ENCODE measurements at regions of chr2 and their contacts with region 1.

Region 1: GRCh38 chr2:241355983-241356870 is at the start of gene FARP2:
- DNase-seq: peak; percentile 94 to 99 (median 97)
- ATAC-seq: peak; percentile 94
- H3K4me3 ChIP-seq: peak within 1 kb of the TSS; percentile 55 to 58
- H3K4me3 Mint-ChIP-seq: peak within 1 kb of the TSS; percentile 86
- H3K27ac ChIP-seq: peak within 1 kb of the TSS; percentile 23 to 52
- H3K27ac Mint-ChIP-seq: peak within 1 kb of the TSS; percentile 87
- H3K4me1 ChIP-seq: peaks cover 10% of the 10 kb centered on the region
- H3K4me1 Mint-ChIP-seq: peaks cover 21% of the 10 kb centered on the region
- H3K27me3 ChIP-seq: no peaks in the 10 kb centered on the region
- H3K27me3 Mint-ChIP-seq: no peaks in the 10 kb centered on the region
- CTCF ChIP-seq: no peak
- total RNA-seq, gene FARP2: 20.6 to 22.5 TPM

Region 2: DNA sequence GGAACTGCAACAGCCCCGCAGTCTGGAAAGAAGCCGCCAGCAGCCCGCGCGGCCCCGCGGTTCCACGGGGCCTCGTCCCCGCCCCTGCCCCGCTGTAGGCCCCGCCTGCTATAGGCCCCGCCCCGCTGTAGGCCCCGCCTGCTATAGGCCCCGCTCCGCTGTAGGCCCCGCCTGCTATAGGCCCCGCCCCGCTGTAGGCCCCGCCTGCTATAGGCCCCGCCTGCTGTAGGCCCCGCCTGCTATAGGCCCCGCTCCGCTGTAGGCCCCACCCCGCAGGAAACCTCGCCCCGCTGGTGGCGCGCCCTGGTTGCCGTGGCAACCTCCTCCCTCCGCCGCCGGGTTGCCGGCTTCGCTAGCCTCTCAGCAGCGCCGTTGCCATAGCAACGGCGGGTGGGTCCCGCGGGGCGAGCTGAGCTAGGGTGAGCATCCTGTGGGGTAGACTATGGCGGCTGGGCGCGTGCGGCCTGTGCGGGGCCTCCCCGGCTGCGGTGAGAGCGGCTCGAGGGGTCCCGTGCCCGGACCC is 524.0 kb before region 1 on chr2:
- CTCF ChIA-PET with region 1: no interaction called
- POLR2A ChIA-PET with region 1: no interaction called
- intact Hi-C with region 1: loop called in 1 of 2 experiments (anchors 2 kb)
- DNase-seq: peak; percentile 96 to 99 (median 99)
- ATAC-seq: peak; percentile 93
- H3K4me3 ChIP-seq: peak overlapping the region; percentile 49 to 64
- H3K4me3 Mint-ChIP-seq: no peak overlapping the region
- H3K27ac ChIP-seq: peak overlapping the region in 1 of 2 experiments; percentile 19
- H3K27ac Mint-ChIP-seq: no peak overlapping the region
- H3K4me1 ChIP-seq: peaks cover 11% of the 10 kb centered on the region
- H3K4me1 Mint-ChIP-seq: peaks cover 6% of the 10 kb centered on the region
- H3K27me3 ChIP-seq: peaks cover 4 to 9% of the 10 kb centered on the region in 2 experiments
- H3K27me3 Mint-ChIP-seq: peaks cover 12% of the 10 kb centered on the region
- CTCF ChIP-seq: no peak

Region 3: GRCh38 chr2:241390301-241391206 is 34.3 kb after region 1 on chr2:
- CTCF ChIA-PET with region 1: no interaction called
- POLR2A ChIA-PET with region 1: no interaction called
- intact Hi-C with region 1: no loop called
- DNase-seq: no peak
- ATAC-seq: no peak
- H3K4me3 ChIP-seq: no peak overlapping the region
- H3K4me3 Mint-ChIP-seq: no peak overlapping the region
- H3K27ac ChIP-seq: no peak overlapping the region
- H3K27ac Mint-ChIP-seq: no peak overlapping the region
- H3K4me1 ChIP-seq: no peaks in the 10 kb centered on the region
- H3K4me1 Mint-ChIP-seq: no peaks in the 10 kb centered on the region
- H3K27me3 ChIP-seq: no peaks in the 10 kb centered on the region
- H3K27me3 Mint-ChIP-seq: no peaks in the 10 kb centered on the region
- CTCF ChIP-seq: no peak

Region 4: DNA sequence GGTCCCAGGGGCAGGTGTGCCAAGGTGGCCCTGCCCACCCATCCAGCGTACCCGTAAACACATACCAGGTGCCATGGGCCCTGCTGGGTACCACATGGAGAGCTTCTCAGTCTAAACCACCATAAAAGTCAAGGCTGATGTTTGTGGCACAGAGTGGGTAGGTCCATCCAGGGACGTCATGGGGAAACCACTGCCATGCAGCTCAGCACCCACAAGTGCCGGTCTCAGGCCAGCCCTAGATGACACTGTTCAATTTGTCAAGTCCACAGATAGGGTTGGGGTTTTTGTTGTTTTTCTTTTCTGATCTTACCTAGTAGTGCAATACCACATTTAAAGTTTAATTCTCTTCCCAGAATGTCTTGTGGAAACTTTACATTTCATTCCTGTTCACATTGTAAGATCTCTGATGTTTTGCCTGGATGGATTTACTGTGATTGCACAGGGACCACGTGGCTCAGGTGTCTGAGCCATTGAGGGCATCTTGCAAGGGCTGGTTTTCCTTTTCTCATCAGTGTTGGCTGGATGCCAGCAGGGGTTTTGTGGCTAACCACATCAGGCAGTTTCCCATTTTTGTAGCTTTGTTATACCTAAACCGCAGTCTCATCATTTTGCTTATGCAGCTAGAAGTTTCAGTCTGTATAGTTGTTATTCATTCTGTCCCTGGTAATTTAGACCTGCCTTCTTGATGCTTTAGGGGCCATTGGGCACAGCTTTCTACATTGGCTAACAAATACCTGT is 87.4 kb after region 1 on chr2:
- CTCF ChIA-PET with region 1: no interaction called
- POLR2A ChIA-PET with region 1: no interaction called
- intact Hi-C with region 1: loop called in 1 of 2 experiments (anchors 5 kb)
- DNase-seq: peak; percentile 82 to 97 (median 93)
- ATAC-seq: peak; percentile 78
- H3K4me3 ChIP-seq: no peak overlapping the region
- H3K4me3 Mint-ChIP-seq: no peak overlapping the region
- H3K27ac ChIP-seq: no peak overlapping the region
- H3K27ac Mint-ChIP-seq: peak overlapping the region; percentile 47
- H3K4me1 ChIP-seq: peaks cover 24% of the 10 kb centered on the region
- H3K4me1 Mint-ChIP-seq: peaks cover 16% of the 10 kb centered on the region
- H3K27me3 ChIP-seq: peaks cover 6 to 32% of the 10 kb centered on the region in 2 experiments
- H3K27me3 Mint-ChIP-seq: peaks cover 59% of the 10 kb centered on the region
- CTCF ChIP-seq: no peak

Region 5: DNA sequence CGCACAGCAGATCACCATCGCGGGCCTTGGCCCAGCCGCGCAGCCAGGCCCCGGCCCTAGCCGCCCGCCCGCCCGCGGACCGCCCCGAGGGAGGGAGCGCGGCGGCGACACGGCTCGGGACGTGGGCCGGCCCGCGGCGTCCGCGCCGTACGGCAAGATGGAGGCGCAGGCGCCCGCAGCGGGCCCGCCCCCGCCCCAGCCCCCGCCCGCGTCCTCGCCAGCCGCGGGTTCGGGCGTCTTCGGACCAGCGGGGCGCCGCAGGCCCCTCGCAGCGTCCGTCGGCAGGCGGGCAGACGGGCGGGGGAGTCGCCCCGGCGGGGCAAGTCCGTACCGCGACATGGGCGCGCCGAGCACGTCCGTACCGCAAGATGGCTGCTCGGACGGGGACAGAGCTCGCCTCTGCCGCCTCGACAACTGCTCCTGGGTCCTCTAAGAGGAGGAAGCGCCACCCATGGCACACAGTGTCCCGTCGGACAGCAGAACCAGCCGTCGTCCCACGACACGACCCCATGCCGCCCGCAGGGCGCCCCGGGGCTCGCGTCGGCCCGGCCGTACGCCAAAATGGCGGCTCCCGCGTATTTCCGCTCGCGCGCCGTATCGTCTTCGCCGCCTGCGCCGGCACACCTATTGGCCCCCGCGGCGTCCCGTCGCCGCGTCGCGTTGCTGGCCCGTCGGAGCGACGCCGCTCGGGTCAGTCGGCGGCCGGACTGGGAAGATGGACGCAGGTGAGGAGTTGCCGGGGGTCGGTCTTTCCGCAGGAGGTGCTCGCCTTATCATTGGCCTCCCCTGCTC is 281.0 kb after region 1 on chr2 and contains the starts of genes ATG4B and THAP4:
- CTCF ChIA-PET with region 1: no interaction called
- POLR2A ChIA-PET with region 1: no interaction called
- intact Hi-C with region 1: loop called (anchors 1 kb)
- DNase-seq: peak; percentile 46 to 88 (median 76)
- ATAC-seq: peak; percentile 71
- H3K4me3 ChIP-seq: peak within 1 kb of the TSS; percentile 83 to 95
- H3K4me3 Mint-ChIP-seq: peak within 1 kb of the TSS; percentile 89
- H3K27ac ChIP-seq: peak within 1 kb of the TSS; percentile 80 to 96
- H3K27ac Mint-ChIP-seq: peak within 1 kb of the TSS; percentile 92
- H3K4me1 ChIP-seq: peaks cover 37% of the 10 kb centered on the region
- H3K4me1 Mint-ChIP-seq: peaks cover 55% of the 10 kb centered on the region
- H3K27me3 ChIP-seq: no peaks in the 10 kb centered on the region
- H3K27me3 Mint-ChIP-seq: no peaks in the 10 kb centered on the region
- CTCF ChIP-seq: no peak
- total RNA-seq, gene ATG4B: 94.0 to 94.5 TPM
- total RNA-seq, gene THAP4: 19.5 to 24.3 TPM

Region 6: DNA sequence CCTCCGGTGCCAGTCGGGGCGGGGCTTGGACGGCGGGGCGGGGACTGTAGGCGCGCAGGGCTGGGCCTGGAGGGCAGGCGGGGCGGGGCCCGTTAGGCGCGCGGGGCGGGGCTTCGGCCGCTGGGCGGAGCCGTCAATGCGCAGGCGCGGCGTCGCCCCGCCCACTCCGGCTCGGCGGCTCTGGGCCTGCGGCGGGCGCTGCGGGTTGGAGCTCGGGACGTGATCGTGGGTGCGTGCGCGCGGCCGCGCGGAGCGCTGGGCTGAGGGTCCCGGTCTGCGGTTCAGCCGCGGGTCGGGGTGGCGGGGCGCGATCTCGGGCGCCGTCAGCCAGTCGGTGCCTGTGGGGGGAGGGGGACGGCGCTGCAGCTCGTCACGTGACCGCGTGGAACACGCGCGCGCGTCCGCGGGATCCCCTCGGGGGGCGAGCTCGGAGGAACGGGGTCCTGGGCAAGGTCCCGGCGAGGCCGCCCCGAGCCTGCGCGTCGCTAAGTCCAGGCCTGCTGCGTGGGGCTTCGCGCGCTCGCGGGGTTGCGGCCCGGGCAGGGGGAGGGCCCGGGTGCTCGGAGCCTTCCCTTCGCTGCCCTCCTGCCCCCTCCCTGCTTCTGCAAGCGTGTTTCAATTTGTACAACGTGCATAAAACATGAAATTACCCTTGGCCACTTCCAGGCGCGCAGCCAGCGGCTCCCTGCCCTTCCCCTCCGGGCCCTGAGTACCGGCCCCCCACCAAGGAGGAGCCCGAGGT is 378.4 kb after region 1 on chr2 and contains the start of gene D2HGDH:
- CTCF ChIA-PET with region 1: no interaction called
- POLR2A ChIA-PET with region 1: no interaction called
- intact Hi-C with region 1: loop called (anchors 10 kb)
- DNase-seq: peak; percentile 84 to 97 (median 94)
- ATAC-seq: peak; percentile 92
- H3K4me3 ChIP-seq: peak within 1 kb of the TSS; percentile 68 to 70
- H3K4me3 Mint-ChIP-seq: peak within 1 kb of the TSS; percentile 86
- H3K27ac ChIP-seq: peak within 1 kb of the TSS; percentile 26 to 65
- H3K27ac Mint-ChIP-seq: peak within 1 kb of the TSS; percentile 85
- H3K4me1 ChIP-seq: peaks cover 22% of the 10 kb centered on the region
- H3K4me1 Mint-ChIP-seq: peaks cover 25% of the 10 kb centered on the region
- H3K27me3 ChIP-seq: no peaks in the 10 kb centered on the region
- H3K27me3 Mint-ChIP-seq: no peaks in the 10 kb centered on the region
- CTCF ChIP-seq: no peak
- total RNA-seq, gene D2HGDH: 41.6 to 46.4 TPM